ENCODE measurements at regions of chr18 and their contacts with region 1.

Region 1: DNA sequence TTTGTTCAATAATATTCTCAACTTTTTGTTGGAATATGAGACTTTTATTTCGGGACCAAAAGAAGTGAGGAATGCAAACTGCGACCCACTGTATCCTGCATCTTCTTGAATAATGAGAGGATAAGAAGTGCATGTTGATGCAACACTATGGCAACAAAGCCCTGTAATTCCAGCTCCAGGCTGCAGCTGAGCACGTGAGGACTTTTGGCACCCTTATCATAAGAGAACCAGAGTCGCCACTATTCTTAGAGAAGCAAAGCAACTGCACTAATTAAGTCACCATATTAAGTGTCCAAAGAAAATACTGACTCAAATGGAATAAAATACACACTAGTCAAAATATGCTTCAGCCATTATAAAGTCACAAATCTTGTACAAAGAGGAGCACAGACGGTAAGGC is 65.8 kb downstream of the FAM210A start:
- DNase-seq: no peak
- ATAC-seq: no peak
- H3K4me3 ChIP-seq: no peak overlapping the region
- H3K27ac ChIP-seq: no peak overlapping the region
- H3K4me1 ChIP-seq: no peaks in the 10 kb centered on the region; the same call in 1 of the 2 replicates
- H3K27me3 ChIP-seq: no peaks in the 10 kb centered on the region
- CTCF ChIP-seq: no peak

Region 2: DNA sequence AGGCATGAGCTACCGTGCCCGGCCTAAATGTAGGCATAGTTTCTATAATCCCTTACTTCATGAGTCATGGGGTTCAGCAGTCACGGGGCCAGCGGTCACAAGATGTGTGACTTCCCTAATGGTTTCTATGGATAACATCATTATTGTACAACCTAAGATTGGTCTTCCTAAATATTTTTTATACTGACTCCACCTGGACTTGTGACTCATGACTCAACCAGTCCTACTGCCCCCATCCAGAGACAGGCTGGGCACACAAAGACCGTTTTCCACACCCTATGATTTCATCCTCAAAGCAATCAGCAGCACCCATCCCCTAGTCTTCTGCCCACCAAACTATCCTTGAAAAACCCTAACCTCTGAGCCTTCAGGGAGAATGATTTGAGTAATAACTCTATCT is 50.0 kb after region 1 on chr18:
- CTCF ChIA-PET with region 1: no interaction called
- POLR2A ChIA-PET with region 1: no interaction called
- in situ Hi-C with region 1: no loop called
- intact Hi-C with region 1: loop called (anchors 10 kb)
- DNase-seq: no peak
- ATAC-seq: no peak
- H3K4me3 ChIP-seq: no peak overlapping the region
- H3K27ac ChIP-seq: no peak overlapping the region
- H3K4me1 ChIP-seq: no peaks in the 10 kb centered on the region
- H3K27me3 ChIP-seq: no peaks in the 10 kb centered on the region
- CTCF ChIP-seq: no peak

Region 3: DNA sequence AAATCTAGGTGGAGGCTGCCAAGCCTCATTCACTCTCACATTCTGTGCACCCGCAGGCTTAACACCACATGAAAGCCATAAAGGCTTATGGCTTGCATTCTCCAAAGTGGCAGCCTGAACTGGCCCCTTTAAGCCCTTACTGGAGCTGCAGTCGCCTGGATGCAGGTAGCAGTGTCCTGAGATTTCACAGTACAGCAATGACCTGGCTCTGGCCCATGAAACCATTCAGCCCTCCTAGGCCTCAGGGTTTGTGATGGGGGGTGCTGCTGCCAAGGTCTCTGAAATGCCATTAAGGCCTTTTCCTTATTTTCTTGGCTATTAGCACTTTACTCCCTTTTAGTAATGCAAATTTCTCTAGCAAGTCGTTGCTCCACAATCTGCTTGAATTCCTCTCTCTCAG is 114.5 kb after region 1 on chr18:
- CTCF ChIA-PET with region 1: no interaction called
- POLR2A ChIA-PET with region 1: interaction called, 12 read pairs
- in situ Hi-C with region 1: no loop called
- intact Hi-C with region 1: no loop called
- DNase-seq: no peak
- ATAC-seq: no peak
- H3K4me3 ChIP-seq: no peak overlapping the region
- H3K27ac ChIP-seq: no peak overlapping the region
- H3K4me1 ChIP-seq: no peaks in the 10 kb centered on the region
- H3K27me3 ChIP-seq: no peaks in the 10 kb centered on the region; the same call in 1 of the 2 replicates
- CTCF ChIP-seq: no peak